Tibial artery (tissue), 4 donors: ENCODE measurements at regions of chr11 and their contacts with region 1.

Region 1: DNA sequence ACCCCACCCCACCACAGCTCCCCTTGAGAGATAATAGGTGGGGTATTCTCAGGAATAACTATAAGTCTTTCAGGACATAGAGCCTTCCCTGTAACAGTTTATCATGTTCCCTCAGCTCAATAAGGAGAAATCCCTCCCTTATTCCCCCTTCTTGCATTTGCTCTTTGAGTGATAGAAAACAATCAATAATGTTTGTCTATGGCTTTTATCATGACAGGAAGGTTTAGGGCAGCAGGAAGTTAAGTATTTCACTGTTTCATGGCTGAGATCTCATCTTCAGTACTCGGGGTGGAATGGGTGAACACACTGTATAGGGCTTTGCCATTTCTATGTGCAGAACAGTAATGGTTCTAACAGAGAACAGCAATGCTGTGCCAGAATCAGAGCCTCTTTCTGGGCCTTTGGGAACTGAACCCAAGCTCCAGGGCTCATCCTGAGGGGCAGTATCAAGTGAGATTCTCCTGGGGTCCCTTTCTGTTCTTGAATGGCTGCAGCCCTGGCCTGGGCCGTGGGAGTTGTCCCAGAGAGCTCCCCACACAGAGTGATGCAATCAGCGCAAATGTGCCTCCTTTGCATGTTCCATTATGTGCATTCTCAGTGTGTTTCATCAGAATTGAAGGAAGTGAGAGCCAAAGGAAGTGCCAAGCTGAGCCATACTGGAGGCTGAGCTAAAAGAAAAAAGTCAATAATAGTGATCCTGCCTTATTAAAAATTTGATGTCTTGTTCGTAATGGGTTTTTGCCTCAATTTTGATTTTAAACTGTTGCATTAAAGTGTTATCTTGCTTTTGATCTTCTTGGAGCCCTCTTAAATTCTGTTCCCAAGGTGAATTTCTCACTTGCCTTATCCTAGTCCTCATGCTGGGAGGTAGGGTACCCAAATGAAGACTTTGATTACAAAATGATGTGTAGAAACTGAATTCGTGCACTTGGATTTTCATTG is 2.9 kb upstream of the CYP2R1 start:
- DNase-seq: peak; percentile 67 to 70
- H3K4me3 ChIP-seq: no peak overlapping the region
- H3K27ac ChIP-seq: no peak overlapping the region
- H3K4me1 ChIP-seq: peaks cover 0 to 10% (median 7%) of the 10 kb centered on the region in 4 donors
- H3K27me3 ChIP-seq: no peaks in the 10 kb centered on the region
- CTCF ChIP-seq: no peak

Region 2: GRCh38 chr11:14519917-14520746 is 374.8 kb before region 1 on chr11 and contains the start of gene PSMA1:
- intact Hi-C with region 1: loop called (anchors 5 kb)
- DNase-seq: peak; percentile 96 to 97
- H3K4me3 ChIP-seq: peak within 1 kb of the TSS; percentile 65 to 78
- H3K27ac ChIP-seq: peak within 1 kb of the TSS; percentile 83 to 84
- H3K4me1 ChIP-seq: peaks cover 0 to 20% (median 13%) of the 10 kb centered on the region in 4 donors
- H3K27me3 ChIP-seq: no peaks in the 10 kb centered on the region
- CTCF ChIP-seq: peak; percentile 53 to 78